ENCODE measurements at regions of chr10 and their contacts with region 1.

Region 1: DNA sequence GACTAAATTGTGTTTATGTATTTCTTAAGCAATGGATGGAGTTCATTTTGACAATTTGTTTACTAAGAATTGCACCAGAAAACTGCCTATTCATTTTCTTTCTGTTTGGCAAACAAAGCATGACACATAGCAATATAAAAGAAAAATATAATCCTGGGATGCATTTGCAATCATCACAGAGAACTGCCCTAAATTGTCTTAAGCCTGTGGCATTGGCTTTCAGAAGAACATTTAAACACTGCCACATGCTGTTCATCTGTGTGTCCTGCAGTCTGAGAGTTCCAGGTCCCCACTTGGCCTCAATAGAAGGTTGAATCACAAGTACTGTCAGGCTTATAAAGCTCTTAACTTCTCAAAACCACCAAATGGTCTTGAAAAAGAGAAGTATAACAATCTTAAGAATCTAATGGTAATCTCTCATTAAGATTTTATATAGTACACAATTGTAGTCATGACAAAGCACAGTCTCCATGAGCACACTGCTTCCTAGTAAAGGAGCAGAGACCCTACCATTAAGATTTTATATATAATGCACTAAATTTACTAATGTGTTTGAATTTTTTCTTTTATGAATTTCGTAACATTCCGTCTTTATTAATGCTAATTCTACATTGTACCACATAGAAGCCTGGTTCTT is 29.9 kb downstream of the RNLS start:
- DNase-seq: peak; percentile 37
- H3K4me3 ChIP-seq: no peak overlapping the region
- H3K27ac ChIP-seq: no peak overlapping the region
- H3K4me1 ChIP-seq: no peaks in the 10 kb centered on the region
- H3K27me3 ChIP-seq: no peaks in the 10 kb centered on the region
- CTCF ChIP-seq: peak; percentile 81

Region 2: DNA sequence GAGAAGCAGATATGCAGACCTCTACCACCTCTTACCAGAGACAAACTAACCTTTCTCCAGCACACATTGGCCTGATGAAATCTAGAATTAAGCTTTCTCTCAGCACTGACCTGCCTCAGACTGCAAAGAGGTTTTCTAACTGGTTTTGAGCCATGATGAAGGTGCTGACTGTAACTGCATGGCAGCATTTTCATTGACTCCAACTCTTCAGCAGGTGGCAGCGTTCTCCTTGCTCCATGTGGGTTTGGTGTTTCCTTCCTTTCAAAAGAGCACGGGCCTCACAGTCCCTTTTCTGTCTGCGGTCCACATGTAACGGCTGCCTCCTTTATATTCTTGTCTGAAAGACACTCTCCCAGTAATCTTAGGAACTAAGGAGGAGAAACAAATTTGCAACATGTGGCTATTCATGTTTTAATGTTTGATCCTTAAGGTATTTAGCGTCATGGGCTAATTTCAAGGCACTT is 702.5 kb before region 1 on chr10:
- intact Hi-C with region 1: loop called (anchors 5 kb)
- DNase-seq: peak; percentile 70
- H3K4me3 ChIP-seq: no peak overlapping the region
- H3K27ac ChIP-seq: no peak overlapping the region
- H3K4me1 ChIP-seq: no peaks in the 10 kb centered on the region
- H3K27me3 ChIP-seq: no peaks in the 10 kb centered on the region
- CTCF ChIP-seq: peak; percentile 49

Region 3: GRCh38 chr10:88401671-88402347 is 151.4 kb before region 1 on chr10:
- intact Hi-C with region 1: loop called (anchors 5 kb)
- DNase-seq: no peak
- H3K4me3 ChIP-seq: no peak overlapping the region
- H3K27ac ChIP-seq: no peak overlapping the region
- H3K4me1 ChIP-seq: no peaks in the 10 kb centered on the region
- H3K27me3 ChIP-seq: no peaks in the 10 kb centered on the region
- CTCF ChIP-seq: no peak

Region 4: GRCh38 chr10:89047397-89047796 is 494.2 kb after region 1 on chr10:
- intact Hi-C with region 1: no loop called
- DNase-seq: no peak
- H3K4me3 ChIP-seq: no peak overlapping the region
- H3K27ac ChIP-seq: no peak overlapping the region
- H3K4me1 ChIP-seq: no peaks in the 10 kb centered on the region
- H3K27me3 ChIP-seq: no peaks in the 10 kb centered on the region
- CTCF ChIP-seq: no peak